HEK293 (cell line): ENCODE measurements at regions of chr9 and their contacts with region 1.

Region 1: DNA sequence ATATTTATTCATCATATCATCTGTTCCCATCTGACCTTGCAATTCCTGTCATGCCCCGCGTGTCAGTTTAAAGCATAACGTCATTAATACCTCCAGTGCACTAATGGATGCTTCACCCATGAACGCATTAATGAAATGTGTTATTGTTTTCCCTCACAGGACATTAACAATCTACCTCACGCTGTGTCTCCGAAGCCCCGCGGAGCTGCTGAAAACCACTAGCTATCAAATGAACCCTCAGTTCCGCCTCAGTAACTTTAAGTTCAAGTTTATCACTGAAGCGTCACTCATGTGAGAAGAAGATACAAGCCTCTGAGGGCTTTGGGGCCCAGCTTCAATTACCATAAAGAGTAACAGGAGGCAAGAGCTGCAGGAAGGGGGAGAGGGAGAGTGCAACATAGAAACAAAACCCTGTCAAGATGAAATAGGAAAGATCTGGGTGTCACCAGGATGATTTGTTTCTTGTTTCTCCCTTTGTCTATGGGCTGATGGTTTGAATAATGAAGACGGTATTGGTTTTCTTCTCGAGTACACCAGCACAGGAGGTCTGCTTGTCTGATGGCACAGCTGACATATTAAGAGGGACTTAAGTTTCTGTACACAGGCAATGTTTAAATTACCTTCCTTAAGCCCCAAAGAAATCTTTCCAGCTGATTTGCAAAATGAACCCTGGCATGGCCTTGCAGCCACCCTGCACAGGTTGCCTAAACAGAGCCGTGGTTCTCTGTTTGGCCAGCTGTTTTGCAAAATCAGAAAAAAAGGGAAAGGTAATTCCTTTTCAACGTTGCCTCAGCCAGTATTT is 139.3 kb downstream of the RASEF start:
- H3K4me3 ChIP-seq: no peak overlapping the region
- H3K27ac ChIP-seq: peak overlapping the region; percentile 70
- H3K4me1 ChIP-seq: peaks cover 9% of the 10 kb centered on the region
- CTCF ChIP-seq: no peak

Region 2: GRCh38 chr9:82934952-82935351 is 11.3 kb after region 1 on chr9:
- CTCF ChIA-PET with region 1: interaction called, 6 read pairs
- POLR2A ChIA-PET with region 1: interaction called, 32 read pairs
- H3K4me3 ChIP-seq: no peak overlapping the region
- H3K27ac ChIP-seq: peak overlapping the region; percentile 19; the same call in 1 of the 2 replicates
- H3K4me1 ChIP-seq: peaks cover 9% of the 10 kb centered on the region; the same call in 1 of the 2 replicates
- CTCF ChIP-seq: no peak

Region 3: DNA sequence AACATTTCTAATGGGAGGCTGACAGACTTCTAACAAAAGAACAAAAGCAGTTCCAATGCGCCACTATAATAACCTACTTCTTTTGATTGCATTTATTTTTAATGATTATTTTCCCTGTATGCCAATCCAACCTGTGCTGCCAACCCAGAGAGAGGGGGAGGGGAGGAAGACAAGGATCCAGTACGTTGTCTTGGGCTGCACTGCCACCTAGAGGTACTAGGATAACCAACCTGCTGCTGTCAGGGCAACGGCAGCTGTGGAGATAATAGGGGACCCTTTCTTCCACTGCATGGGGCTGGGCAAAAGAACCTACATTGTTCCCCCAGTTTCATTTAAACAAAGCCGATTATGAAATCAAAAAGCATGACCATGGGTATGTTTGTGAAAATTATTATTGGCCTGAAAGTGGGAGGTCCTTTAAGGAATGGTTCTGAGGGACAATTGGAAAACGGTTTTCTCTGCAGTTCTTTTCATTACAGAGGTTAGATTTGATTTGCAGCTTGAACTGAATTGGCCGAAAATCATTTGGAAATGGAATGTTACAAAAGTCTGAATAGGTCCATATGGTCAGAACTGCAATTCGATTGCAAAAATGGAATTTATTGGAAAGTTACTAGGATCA is 38.0 kb after region 1 on chr9:
- CTCF ChIA-PET with region 1: interaction called, 3 read pairs
- POLR2A ChIA-PET with region 1: interaction called, 13 read pairs
- H3K4me3 ChIP-seq: no peak overlapping the region
- H3K27ac ChIP-seq: peak overlapping the region; percentile 21; the same call in 1 of the 2 replicates
- H3K4me1 ChIP-seq: peaks cover 8% of the 10 kb centered on the region
- CTCF ChIP-seq: peak; percentile 70

Region 4: GRCh38 chr9:82991671-82992070 is 68.0 kb after region 1 on chr9:
- CTCF ChIA-PET with region 1: no interaction called
- POLR2A ChIA-PET with region 1: no interaction called
- H3K4me3 ChIP-seq: no peak overlapping the region
- H3K27ac ChIP-seq: no peak overlapping the region
- H3K4me1 ChIP-seq: no peaks in the 10 kb centered on the region
- CTCF ChIP-seq: no peak

Region 5: DNA sequence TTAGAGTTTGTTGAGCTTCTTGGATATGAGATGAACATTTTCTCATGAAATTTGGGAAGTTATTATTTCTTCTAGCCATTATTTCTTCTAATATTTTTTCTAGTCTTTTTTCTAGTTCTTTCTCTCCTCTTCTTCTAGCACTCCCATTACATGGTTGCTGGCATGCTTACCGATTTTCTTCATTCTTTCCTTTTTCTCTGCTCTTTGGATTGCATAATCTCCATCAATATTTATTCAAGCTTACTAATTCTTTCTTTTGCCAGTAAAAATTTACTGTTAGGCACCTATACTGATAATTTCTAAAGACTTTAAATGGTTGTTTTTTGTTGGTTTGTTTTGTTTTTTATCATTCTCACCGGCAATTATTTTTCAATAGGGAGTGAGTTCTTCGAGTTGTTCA is 254.1 kb after region 1 on chr9:
- CTCF ChIA-PET with region 1: no interaction called
- POLR2A ChIA-PET with region 1: no interaction called
- H3K4me3 ChIP-seq: no peak overlapping the region
- H3K27ac ChIP-seq: no peak overlapping the region
- H3K4me1 ChIP-seq: no peaks in the 10 kb centered on the region
- CTCF ChIP-seq: no peak